CD4-positive, alpha-beta memory T cell (primary cell): ENCODE measurements at regions of chr18 and their contacts with region 1.

Region 1: GRCh38 chr18:63292831-63293683 is 26.5 kb downstream of the BCL2 start:
- DNase-seq: peak in 1 of 5 donors; percentile 59
- H3K4me3 ChIP-seq: peak overlapping the region in 1 of 2 donors; percentile 20
- H3K4me3 Mint-ChIP-seq: peak overlapping the region in 5 of 8 donors; percentile 28 to 86 (median 76)
- H3K27ac ChIP-seq: peak overlapping the region; percentile 27
- H3K27ac Mint-ChIP-seq: peak overlapping the region in 6 of 7 donors; percentile 65 to 90 (median 84)
- H3K4me1 ChIP-seq: peaks cover 82% of the 10 kb centered on the region
- H3K4me1 Mint-ChIP-seq: peaks cover 11 to 56% (median 40%) of the 10 kb centered on the region in 4 donors
- H3K27me3 ChIP-seq: no peaks in the 10 kb centered on the region
- H3K27me3 Mint-ChIP-seq: no peaks in the 10 kb centered on the region

Region 2: DNA sequence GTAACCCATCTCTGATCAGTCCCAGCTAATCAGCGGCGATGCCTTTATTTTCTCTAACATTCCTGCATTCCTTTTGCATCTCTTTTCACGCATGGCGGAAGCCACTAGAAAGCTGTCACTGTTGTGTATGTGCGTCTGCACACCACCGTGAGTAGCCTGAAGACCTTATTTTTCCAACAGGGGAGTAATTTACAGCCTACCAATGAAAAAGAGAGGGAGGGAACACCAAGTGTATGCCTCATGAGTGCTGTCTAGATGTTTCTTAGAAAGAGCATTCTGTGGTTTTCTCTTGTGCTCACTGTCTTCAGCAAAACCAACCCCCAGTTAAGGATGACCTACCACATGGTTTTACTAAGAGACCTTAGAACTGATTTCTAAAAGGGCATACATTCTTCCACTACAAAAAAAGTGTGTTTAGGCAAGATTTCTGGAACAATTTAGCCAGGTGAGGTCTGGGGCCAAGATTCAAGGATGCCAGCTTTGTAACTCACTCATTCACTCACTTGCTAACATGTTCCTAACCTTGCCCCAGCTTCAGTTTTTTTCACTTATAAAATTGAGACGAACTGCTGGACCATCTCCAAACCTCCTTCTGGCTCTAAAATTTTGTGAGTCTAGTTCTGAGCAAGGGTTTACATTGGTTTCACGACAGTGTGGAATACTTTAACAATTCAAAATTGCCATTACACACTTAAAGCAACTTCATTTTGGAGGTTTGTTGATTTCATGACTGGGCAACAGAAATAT is 24.9 kb before region 1 on chr18:
- CTCF ChIA-PET with region 1: interaction called, 10 read pairs
- POLR2A ChIA-PET with region 1: interaction called, 12 read pairs
- intact Hi-C with region 1: no loop called
- DNase-seq: no peak
- H3K4me3 ChIP-seq: no peak overlapping the region
- H3K4me3 Mint-ChIP-seq: peak overlapping the region in 7 of 8 donors; percentile 8 to 75 (median 67)
- H3K27ac ChIP-seq: no peak overlapping the region
- H3K27ac Mint-ChIP-seq: peak overlapping the region; percentile 8 to 72 (median 50)
- H3K4me1 ChIP-seq: peaks cover 73% of the 10 kb centered on the region
- H3K4me1 Mint-ChIP-seq: peaks cover 48 to 88% (median 65%) of the 10 kb centered on the region in 4 donors
- H3K27me3 ChIP-seq: no peaks in the 10 kb centered on the region
- H3K27me3 Mint-ChIP-seq: no peaks in the 10 kb centered on the region

Region 3: DNA sequence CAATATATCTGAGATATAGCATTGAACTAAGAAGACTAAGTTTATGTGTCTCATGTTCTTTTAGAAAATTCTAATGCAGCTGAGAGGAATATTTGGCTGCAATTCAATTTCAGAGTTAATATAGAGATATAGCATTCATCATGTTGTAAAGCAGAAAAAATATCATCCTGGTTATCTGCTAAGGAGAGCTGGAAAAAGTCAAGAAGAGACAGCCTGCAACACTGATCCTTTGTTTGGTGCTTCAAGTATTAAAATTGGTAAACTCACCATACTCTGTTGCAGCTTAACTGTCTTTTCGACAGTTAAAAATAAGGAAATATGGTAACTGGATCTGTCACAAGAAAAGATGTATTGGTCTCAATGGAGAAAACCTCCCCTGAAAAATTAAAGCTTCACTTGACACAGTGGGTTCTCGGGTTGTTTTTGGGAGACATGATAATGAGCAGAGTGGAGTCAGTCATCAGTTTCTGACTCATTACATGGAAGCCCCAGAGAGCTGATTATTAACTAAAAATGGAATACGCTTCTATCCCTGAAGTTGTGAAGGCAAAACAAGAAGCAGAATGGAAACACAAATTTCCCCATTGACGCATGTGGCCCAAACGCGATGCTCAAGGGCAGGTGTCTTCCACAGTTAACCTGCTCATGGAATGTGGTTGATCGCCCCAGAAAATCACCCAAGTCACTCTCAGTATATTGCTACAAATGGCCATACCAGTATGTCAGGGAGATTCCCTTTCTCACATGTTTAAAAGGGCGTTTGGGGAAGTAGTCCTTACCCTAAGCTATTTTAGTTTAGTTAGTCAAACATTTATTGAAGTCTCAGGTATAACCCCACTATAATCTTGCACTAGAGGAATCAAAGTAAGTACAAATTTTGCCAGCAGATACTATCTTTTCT is 18.3 kb after region 1 on chr18:
- CTCF ChIA-PET with region 1: interaction called, 9 read pairs
- POLR2A ChIA-PET with region 1: interaction called, 94 read pairs
- intact Hi-C with region 1: loop called (anchors 1 kb)
- DNase-seq: no peak
- H3K4me3 ChIP-seq: no peak overlapping the region
- H3K4me3 Mint-ChIP-seq: peak overlapping the region in 7 of 8 donors; percentile 26 to 92 (median 69)
- H3K27ac ChIP-seq: peak overlapping the region; percentile 14
- H3K27ac Mint-ChIP-seq: peak overlapping the region; percentile 51 to 94 (median 80)
- H3K4me1 ChIP-seq: peaks cover 96% of the 10 kb centered on the region
- H3K4me1 Mint-ChIP-seq: peaks cover 61 to 96% (median 82%) of the 10 kb centered on the region in 4 donors
- H3K27me3 ChIP-seq: no peaks in the 10 kb centered on the region
- H3K27me3 Mint-ChIP-seq: no peaks in the 10 kb centered on the region